AG04450 (cell line): ENCODE measurements at regions of chr6 and their contacts with region 1.

Region 1: GRCh38 chr6:133291671-133292070 is 50.5 kb downstream of the EYA4 start:
- DNase-seq: no peak
- H3K4me3 ChIP-seq: no peak overlapping the region
- H3K27ac ChIP-seq: no peak overlapping the region
- H3K27me3 ChIP-seq: no peaks in the 10 kb centered on the region
- CTCF ChIP-seq: no peak

Region 2: GRCh38 chr6:132820629-132821381 is 470.9 kb before region 1 on chr6:
- CTCF ChIA-PET with region 1: interaction called, 10 read pairs
- POLR2A ChIA-PET with region 1: no interaction called
- DNase-seq: no peak
- H3K4me3 ChIP-seq: no peak overlapping the region
- H3K27ac ChIP-seq: no peak overlapping the region
- H3K27me3 ChIP-seq: no peaks in the 10 kb centered on the region
- CTCF ChIP-seq: no peak

Region 3: GRCh38 chr6:133218852-133219251 is 72.8 kb before region 1 on chr6:
- CTCF ChIA-PET with region 1: no interaction called
- POLR2A ChIA-PET with region 1: no interaction called
- DNase-seq: no peak
- H3K4me3 ChIP-seq: no peak overlapping the region
- H3K27ac ChIP-seq: no peak overlapping the region
- H3K27me3 ChIP-seq: no peaks in the 10 kb centered on the region
- CTCF ChIP-seq: no peak

Region 4: DNA sequence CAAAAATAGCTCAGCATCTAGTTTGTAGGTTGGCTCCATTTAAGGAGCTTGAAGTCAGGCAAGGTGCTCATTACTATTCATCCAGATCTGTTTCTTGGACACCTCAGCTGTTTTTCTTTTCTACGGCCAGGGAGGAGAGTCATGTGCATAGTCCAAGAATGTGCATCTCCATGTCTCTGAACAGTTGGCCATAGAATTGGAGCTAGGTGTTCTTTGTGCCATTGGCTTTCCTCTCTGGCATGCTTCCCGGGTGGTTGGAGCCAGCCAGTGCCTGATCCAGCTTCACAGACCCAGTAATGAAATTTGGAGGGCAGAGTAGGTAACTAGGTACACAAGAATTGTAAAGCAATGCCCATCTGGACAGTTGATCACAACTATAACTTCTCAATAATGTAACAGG is 28.9 kb before region 1 on chr6:
- CTCF ChIA-PET with region 1: no interaction called
- POLR2A ChIA-PET with region 1: no interaction called
- DNase-seq: no peak
- H3K4me3 ChIP-seq: no peak overlapping the region
- H3K27ac ChIP-seq: no peak overlapping the region
- H3K27me3 ChIP-seq: no peaks in the 10 kb centered on the region
- CTCF ChIP-seq: no peak

Region 5: DNA sequence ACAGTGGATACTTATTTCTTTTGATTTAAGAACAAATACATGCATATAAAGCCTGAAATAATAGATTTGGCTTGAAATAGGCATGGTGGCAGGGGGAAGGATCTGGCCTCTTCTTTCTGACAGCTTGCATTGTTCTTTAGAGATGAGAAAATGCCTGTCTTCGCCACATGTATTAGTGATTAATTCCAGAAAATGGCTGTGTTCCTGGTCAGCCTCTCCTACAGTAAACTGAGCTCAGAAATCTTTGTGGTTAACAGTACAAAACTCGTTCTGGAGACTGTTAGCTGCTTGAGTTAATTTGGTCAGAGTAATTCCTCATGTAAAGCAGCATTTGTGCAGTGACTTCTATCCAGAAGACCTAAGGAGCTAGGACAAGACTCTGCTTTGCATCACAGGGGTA is 101.0 kb after region 1 on chr6:
- CTCF ChIA-PET with region 1: no interaction called
- POLR2A ChIA-PET with region 1: no interaction called
- DNase-seq: no peak
- H3K4me3 ChIP-seq: no peak overlapping the region
- H3K27ac ChIP-seq: no peak overlapping the region
- H3K27me3 ChIP-seq: no peaks in the 10 kb centered on the region
- CTCF ChIP-seq: no peak